ENCODE measurements at regions of chr9 and their contacts with region 1.

Region 1: GRCh38 chr9:73023025-73023541 is 70.2 kb upstream of the ALDH1A1 start:
- DNase-seq: peak; percentile 14
- CTCF ChIP-seq: peak; percentile 70

Region 2: DNA sequence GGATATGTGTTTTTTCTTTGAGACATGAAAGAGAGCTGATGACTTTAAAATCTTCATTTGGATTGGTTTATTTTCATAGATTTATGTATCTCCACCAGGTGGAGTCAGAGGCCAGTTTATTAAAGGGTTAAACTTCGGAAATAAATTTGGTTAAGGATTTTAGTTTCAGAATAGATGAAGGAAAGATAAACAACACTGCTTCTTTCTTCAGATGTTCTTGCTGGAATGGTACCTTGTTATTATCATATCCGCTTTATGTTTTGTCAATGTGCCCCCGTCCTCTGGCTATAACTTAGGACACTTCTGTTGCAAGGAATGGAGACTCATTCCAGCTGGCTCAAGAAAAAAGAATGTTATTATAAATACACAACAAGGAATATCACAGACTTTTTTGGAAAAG is 151.4 kb before region 1 on chr9:
- CTCF ChIA-PET with region 1: interaction called, 11 read pairs
- POLR2A ChIA-PET with region 1: no interaction called
- DNase-seq: no peak
- CTCF ChIP-seq: no peak

Region 3: DNA sequence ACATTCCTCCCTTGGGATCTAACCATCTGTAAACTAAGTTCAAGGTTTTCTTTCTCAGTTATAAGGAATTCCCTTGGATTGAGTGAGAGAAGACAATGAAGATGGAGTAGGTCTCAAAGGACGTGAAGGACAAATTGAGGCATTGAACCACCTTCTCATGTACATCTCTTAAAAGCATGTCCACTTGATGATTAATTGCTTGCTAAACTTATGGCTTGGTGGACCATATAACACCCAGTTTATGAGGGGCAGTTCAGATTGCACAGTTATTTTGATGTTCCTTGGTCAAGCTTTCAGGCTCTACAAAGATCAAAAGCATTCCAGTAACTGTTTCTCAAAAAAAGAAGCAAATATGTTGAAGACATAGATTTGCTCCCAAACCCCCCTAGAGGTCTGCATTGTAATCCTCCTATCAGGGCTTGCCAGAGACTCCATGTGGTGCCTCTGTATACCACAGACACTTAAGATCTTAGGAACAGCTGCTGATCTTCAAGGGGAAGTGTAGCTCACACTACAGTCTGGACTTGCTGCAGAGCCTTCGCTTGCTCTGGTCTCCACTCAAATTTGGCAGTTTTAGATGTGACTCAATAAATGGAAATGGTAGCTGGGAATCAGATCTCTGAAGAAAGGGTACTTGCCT is 13.3 kb before region 1 on chr9:
- CTCF ChIA-PET with region 1: interaction called, 14 read pairs
- POLR2A ChIA-PET with region 1: no interaction called
- DNase-seq: no peak
- CTCF ChIP-seq: no peak

Region 4: GRCh38 chr9:73037613-73038012 is 14.5 kb after region 1 on chr9:
- CTCF ChIA-PET with region 1: interaction called, 10 read pairs
- POLR2A ChIA-PET with region 1: no interaction called
- DNase-seq: no peak
- CTCF ChIP-seq: no peak

Region 5: DNA sequence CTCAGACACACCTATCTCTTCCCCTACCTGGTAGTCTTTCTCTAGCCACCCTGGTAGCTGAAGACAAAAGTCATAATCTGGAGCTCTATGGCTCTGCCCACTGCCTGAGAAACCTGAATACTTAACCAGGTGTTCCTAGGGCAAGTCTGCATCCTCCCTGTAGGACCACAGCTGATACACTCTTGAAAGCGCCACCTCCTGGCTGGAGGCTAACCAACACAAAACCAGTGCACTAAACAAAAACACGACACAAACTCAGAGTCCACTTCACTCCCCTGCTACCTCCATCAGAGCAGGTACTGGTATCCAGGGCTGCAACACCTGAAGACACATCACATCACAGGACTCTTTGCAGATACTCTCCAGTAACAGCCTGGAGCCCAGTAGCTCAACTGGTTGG is 44.0 kb after region 1 on chr9:
- CTCF ChIA-PET with region 1: interaction called, 10 read pairs
- POLR2A ChIA-PET with region 1: no interaction called
- DNase-seq: no peak
- CTCF ChIP-seq: peak; percentile 10

Measured in GM10248 (cell line).